ENCODE measurements at regions of chr3 and their contacts with region 1.

Region 1: GRCh38 chr3:100766069-100766468 is 56.8 kb downstream of the TFG start:
- DNase-seq: no peak
- ATAC-seq: no peak
- H3K4me3 Mint-ChIP-seq: no peak overlapping the region
- H3K27ac Mint-ChIP-seq: no peak overlapping the region
- H3K4me1 Mint-ChIP-seq: no peaks in the 10 kb centered on the region
- H3K27me3 Mint-ChIP-seq: peaks cover 7% of the 10 kb centered on the region
- CTCF ChIP-seq: no peak

Region 2: DNA sequence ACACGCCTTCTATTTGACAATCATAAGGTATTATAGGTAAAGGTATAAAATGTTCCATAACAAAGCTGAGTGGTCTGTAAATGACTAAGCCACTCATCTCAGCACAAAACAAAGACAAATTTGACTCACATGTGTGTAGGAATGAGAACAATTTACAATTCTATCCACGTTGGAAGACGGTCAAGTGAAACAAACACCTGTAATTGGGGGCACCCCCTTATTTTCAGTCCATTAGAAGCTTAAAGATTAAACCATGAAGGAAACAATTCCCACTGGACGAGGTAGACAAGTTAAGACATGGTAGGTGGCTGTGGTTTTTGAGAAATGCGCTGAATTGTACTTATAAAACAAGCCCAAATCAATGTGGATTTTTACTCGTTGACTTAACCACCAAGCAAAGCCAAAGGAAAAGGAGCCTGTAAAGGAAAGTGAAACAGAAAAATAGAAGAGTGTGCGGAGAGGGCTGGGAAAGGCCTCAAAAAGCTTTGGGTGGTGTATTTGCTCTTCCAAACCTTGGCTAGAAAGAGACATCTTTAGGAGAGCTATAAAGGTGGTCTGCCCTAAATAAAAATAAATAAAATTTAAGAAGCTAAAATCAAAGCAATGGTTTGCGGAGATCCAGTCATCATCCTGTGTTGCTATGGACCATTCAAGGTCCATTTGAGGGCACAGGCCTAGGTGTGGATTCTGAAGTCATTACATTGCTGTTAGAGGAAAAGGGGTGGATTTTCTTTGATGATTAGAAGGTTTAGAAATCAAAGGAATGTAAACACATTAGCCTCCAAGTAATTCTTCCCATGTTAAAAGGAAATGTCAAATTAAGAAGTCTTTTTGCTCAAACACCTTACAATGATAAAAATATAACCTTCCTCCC is 78.2 kb after region 1 on chr3:
- CTCF ChIA-PET with region 1: no interaction called
- POLR2A ChIA-PET with region 1: interaction called, 11 read pairs
- intact Hi-C with region 1: no loop called
- DNase-seq: no peak
- ATAC-seq: no peak
- H3K4me3 Mint-ChIP-seq: no peak overlapping the region
- H3K27ac Mint-ChIP-seq: no peak overlapping the region
- H3K4me1 Mint-ChIP-seq: no peaks in the 10 kb centered on the region
- H3K27me3 Mint-ChIP-seq: peaks cover 7% of the 10 kb centered on the region
- CTCF ChIP-seq: no peak

Region 3: DNA sequence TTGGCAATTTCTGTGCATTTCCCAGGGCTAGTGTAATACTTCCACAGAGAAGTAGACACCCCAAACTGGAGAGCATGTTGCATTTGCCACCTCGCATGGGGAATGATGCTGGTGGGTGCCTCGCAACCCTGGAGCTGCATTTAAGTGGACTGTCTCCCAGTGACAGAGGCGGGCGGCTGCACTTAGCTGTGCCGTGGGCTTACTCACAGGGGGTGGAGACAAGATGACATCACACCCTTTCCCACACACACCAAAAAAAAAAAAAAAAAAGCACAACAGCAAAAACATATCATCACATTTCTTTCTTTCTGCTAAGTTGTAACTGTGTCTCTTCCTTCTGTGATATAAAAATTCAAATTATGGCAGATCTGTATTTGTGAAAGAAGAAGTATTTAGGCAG is 227.2 kb after region 1 on chr3 and contains the start of gene ABI3BP:
- CTCF ChIA-PET with region 1: no interaction called
- POLR2A ChIA-PET with region 1: no interaction called
- intact Hi-C with region 1: no loop called
- DNase-seq: no peak
- ATAC-seq: no peak
- H3K4me3 Mint-ChIP-seq: no peak within 1 kb of the TSS
- H3K27ac Mint-ChIP-seq: no peak within 1 kb of the TSS
- H3K4me1 Mint-ChIP-seq: no peaks in the 10 kb centered on the region
- H3K27me3 Mint-ChIP-seq: no peaks in the 10 kb centered on the region
- CTCF ChIP-seq: no peak
- total RNA-seq, gene ABI3BP: not detected in 2 replicates